Mammary epithelial cell (primary cell): ENCODE measurements at regions of chr3 and their contacts with region 1.

Region 1: DNA sequence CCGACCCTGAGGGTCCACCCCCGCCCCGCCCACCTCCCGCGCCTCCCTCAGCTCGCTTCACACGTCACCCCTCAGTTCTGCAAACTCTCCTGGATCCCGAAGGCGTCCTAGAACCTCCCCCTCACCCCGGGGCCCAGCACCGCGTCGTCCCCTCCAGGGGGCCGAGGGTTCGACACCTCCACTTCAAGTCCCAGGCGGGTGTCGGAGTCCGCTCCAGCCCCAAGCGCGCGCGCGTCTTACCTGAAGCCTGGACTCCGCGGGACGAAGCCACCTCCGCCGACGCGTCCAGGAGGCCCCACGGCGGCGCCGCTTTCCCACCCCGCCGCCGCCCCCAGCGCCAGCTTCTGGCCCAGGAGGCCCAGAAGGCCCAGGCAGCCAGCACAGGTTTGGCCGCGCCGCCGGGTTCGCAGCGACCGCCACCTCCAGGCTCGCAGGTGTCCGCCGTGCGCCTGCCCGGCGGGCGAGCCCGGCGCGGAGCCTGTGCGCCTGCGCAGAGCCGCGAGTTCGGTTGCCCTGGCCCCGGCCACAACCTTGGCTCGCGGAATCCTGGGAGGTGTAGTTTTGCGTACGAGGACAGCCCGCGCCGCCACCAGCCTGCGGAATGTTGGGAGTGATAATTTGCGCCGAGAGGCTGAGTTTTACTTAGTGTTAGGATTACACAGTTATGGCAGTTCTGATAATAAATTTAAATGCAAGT is at the start of gene POMGNT2:
- DNase-seq: peak; percentile 86
- H3K4me3 ChIP-seq: peak within 1 kb of the TSS; percentile 74 to 86 (median 74)
- H3K27ac ChIP-seq: no peak within 1 kb of the TSS
- H3K4me1 ChIP-seq: peaks cover 6% of the 10 kb centered on the region
- H3K27me3 ChIP-seq: no peaks in the 10 kb centered on the region
- CTCF ChIP-seq: no peak
- total RNA-seq, gene POMGNT2: 10.3 to 11.2 TPM

Region 2: DNA sequence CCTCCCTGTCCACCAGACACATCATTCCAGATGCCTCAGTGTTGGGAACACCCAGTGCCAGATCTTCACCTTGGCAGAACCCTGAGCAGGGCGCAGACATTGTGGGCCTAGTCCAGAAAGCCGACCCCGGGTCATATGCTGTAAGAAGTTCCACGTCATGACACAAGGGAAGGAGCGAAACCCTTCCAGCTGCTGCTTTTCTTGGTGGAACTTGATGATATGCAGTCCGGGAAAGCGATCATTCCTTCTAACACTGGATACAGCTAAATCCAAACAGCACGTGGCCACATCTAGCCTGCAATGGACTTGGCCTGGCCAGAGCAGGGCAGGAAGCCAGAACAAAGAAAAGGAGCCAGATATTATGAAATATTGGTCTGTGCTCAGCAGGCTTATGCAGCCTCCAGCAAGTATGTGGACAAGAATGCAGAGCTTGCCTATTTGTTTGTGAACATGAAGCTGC is 104.6 kb before region 1 on chr3:
- CTCF ChIA-PET with region 1: no interaction called
- dilution Hi-C with region 1: loop called (anchors 10 kb)
- in situ Hi-C with region 1: no loop called
- intact Hi-C with region 1: no loop called
- DNase-seq: peak; percentile 16
- H3K4me3 ChIP-seq: no peak overlapping the region
- H3K27ac ChIP-seq: no peak overlapping the region
- H3K4me1 ChIP-seq: peaks cover 14% of the 10 kb centered on the region
- H3K27me3 ChIP-seq: no peaks in the 10 kb centered on the region
- CTCF ChIP-seq: no peak